ENCODE measurements at regions of chr1 and their contacts with region 1.

Region 1: GRCh38 chr1:169893494-169894362 is at the start of gene SCYL3:
- DNase-seq: peak; percentile 92
- ATAC-seq: peak; percentile 87
- H3K4me3 Mint-ChIP-seq: peak within 1 kb of the TSS; percentile 80
- H3K27ac Mint-ChIP-seq: peak within 1 kb of the TSS; percentile 99
- H3K4me1 Mint-ChIP-seq: peaks cover 44% of the 10 kb centered on the region
- H3K27me3 Mint-ChIP-seq: no peaks in the 10 kb centered on the region
- total RNA-seq, gene SCYL3: 11.0 to 12.0 TPM

Region 2: GRCh38 chr1:168348146-168348709 is 1545.5 kb before region 1 on chr1:
- CTCF ChIA-PET with region 1: no interaction called
- POLR2A ChIA-PET with region 1: no interaction called
- intact Hi-C with region 1: loop called in 1 of 2 experiments (anchors 5 kb)
- DNase-seq: peak; percentile 24
- ATAC-seq: peak; percentile 42
- H3K4me3 Mint-ChIP-seq: peak overlapping the region; percentile 78
- H3K27ac Mint-ChIP-seq: peak overlapping the region; percentile 88
- H3K4me1 Mint-ChIP-seq: peaks cover 15% of the 10 kb centered on the region
- H3K27me3 Mint-ChIP-seq: no peaks in the 10 kb centered on the region

Region 3: DNA sequence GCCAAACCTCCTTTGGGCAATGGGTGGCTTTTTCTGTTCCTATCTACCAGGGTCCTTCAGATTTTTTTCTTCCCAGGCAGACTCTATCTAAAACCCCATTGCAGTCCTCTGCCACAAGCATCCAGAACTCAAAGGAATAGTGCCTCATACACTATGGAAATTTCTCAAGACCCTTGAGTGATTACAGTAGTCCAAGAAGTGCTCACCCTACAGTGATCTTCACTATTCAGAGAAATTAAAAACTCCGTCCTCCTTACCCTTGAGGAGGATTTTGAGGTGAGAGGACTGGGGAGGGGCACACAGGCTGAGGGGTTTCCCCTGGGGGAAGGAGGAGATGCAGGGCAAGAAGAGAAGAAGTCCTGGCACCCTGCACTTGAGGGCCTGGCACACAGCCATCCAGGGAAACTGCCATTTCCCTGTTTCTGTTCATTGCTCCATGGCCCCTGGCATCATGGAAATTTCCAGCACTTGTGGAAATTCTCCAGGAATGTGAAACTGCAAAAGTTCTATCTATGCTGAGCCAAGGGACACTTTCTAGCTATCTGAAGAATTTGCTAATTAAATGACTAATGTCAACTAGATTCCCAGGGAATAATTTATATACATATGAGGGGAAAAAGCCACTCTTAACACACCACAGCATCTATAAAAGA is 889.7 kb before region 1 on chr1:
- CTCF ChIA-PET with region 1: no interaction called
- POLR2A ChIA-PET with region 1: no interaction called
- intact Hi-C with region 1: no loop called
- DNase-seq: no peak
- ATAC-seq: no peak
- H3K4me3 Mint-ChIP-seq: no peak overlapping the region
- H3K27ac Mint-ChIP-seq: no peak overlapping the region
- H3K4me1 Mint-ChIP-seq: no peaks in the 10 kb centered on the region
- H3K27me3 Mint-ChIP-seq: no peaks in the 10 kb centered on the region

Region 4: GRCh38 chr1:169694304-169695075 is 199.2 kb before region 1 on chr1:
- CTCF ChIA-PET with region 1: interaction called, 3 read pairs
- POLR2A ChIA-PET with region 1: no interaction called
- intact Hi-C with region 1: loop called in 1 of 2 experiments (anchors 5 kb)
- DNase-seq: peak; percentile 52
- ATAC-seq: peak; percentile 26
- H3K4me3 Mint-ChIP-seq: peak overlapping the region; percentile 39
- H3K27ac Mint-ChIP-seq: peak overlapping the region; percentile 95
- H3K4me1 Mint-ChIP-seq: peaks cover 97% of the 10 kb centered on the region
- H3K27me3 Mint-ChIP-seq: no peaks in the 10 kb centered on the region

Region 5: DNA sequence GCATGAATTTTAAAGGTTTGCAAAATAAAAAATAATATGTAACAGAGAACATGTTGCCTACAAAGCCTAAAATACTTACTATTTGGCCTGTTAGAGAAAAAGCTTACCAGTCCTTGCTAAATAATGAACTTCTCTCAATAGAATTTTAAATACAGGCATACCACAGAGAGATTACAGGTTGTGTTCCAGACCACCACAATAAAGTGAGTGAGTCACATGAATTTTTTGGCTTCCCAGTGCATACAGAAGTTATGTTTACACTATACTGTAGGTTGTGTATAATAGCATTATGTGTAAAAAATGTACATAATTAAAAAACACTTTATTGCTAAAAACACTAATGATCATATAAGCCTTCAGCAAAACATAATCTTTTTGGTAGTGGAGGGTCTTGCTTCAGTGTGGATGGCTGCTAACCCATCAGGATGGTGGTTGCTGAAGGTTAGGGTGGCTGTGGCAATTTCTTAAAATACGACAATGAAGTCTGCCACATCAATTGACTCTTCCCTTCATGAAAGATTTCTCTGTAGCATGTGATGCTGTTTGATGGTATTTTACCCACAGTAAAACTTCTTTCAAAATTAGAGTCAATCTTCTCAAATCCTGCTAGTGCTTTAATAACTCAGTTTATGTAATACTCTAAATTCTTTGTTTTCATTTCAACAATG is 48.7 kb before region 1 on chr1:
- CTCF ChIA-PET with region 1: no interaction called
- POLR2A ChIA-PET with region 1: no interaction called
- intact Hi-C with region 1: no loop called
- DNase-seq: no peak
- ATAC-seq: no peak
- H3K4me3 Mint-ChIP-seq: no peak overlapping the region
- H3K27ac Mint-ChIP-seq: no peak overlapping the region
- H3K4me1 Mint-ChIP-seq: peaks cover 2% of the 10 kb centered on the region
- H3K27me3 Mint-ChIP-seq: no peaks in the 10 kb centered on the region

Region 6: DNA sequence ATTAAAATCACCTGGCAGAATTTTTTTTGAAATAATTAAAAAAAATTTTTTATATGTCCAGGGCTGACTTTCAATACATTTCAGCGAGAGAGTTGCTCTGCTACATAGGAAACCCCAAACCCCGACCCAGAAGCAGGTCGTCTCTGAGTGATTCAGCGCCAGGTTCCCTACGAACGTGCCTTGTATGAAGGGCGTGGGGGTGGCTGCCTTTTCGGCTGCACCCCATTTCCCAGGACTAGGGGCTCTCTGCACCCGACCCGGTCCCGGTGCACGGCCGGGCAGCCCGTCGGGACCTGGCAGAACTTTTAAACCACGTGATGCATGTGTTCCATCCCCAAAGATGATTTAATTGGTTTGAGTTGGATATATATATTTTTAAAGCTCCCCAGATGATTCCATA is 15.8 kb after region 1 on chr1:
- CTCF ChIA-PET with region 1: interaction called, 4 read pairs
- POLR2A ChIA-PET with region 1: no interaction called
- intact Hi-C with region 1: loop called in 1 of 2 experiments (anchors 2 kb)
- DNase-seq: no peak
- ATAC-seq: no peak
- H3K4me3 Mint-ChIP-seq: no peak overlapping the region
- H3K27ac Mint-ChIP-seq: no peak overlapping the region
- H3K4me1 Mint-ChIP-seq: peaks cover 12% of the 10 kb centered on the region
- H3K27me3 Mint-ChIP-seq: no peaks in the 10 kb centered on the region

Region 7: DNA sequence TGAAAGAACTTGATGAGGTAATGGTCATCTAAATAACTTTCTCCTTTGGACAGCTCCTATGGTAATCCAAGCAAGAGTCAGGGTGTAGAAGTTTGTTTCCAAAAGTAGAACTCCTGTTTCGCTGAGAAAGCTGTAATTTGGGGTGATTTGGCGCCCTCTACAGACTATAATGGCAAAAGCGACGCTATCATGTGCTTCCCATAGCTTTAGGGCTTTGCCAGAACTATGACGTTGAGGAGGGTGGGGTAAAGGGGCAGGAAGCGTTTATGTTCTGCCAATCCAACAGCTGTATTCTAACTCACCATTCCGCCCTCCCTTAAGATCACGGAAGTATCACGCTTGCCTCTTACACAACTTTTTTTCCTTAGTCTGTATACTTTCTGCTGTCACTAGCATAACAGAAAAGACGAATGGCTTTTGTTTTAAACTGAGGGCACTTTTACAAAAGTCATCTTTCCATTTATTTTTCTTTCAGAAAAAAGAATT is 1420.2 kb after region 1 on chr1 and contains the start of gene FMO4:
- CTCF ChIA-PET with region 1: no interaction called
- POLR2A ChIA-PET with region 1: no interaction called
- intact Hi-C with region 1: loop called in 1 of 2 experiments (anchors 10 kb)
- DNase-seq: peak; percentile 86
- ATAC-seq: peak; percentile 100
- H3K4me3 Mint-ChIP-seq: peak within 1 kb of the TSS; percentile 72
- H3K27ac Mint-ChIP-seq: peak within 1 kb of the TSS; percentile 87
- H3K4me1 Mint-ChIP-seq: peaks cover 14% of the 10 kb centered on the region
- H3K27me3 Mint-ChIP-seq: no peaks in the 10 kb centered on the region
- total RNA-seq, gene FMO4: 1.4 to 2.8 TPM

Region 8: DNA sequence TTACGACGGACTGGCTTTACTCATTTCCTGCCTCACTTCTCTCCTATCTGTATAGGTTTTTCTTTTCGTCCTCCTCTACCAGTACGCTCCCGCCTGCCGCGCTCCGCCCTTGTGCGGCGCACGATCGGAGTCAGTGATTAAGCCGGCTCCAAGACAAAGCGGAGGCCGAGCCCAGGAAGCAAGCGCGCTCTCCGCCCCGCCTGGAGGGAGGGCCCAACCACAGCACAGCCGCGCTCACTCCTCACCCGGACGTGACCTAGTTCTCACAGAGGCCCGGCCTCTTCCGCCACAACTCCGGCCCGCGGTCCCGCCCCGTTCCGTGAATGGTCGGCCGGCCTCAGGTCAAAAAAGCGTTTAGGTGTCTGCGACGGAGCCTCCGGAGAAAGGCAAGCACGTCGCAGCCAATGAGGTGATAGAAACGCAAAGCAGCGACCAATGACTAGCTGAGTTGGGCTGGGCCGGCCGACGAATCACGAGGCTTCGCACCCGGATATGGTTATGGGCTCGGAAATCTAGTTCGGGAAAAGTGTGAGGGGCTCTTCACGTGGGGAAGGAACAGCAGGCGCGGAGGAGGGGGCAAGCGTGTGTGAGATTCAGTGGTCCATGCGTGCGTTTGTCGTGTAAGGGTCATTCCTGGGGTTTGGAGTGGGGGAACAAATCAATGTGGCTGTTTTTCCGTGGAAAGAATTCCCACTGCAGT is 1887.6 kb after region 1 on chr1 and contains the start of gene METTL13:
- CTCF ChIA-PET with region 1: no interaction called
- POLR2A ChIA-PET with region 1: no interaction called
- intact Hi-C with region 1: loop called (anchors 2 to 10 kb)
- DNase-seq: peak; percentile 99
- ATAC-seq: peak; percentile 97
- H3K4me3 Mint-ChIP-seq: peak within 1 kb of the TSS; percentile 92
- H3K27ac Mint-ChIP-seq: peak within 1 kb of the TSS; percentile 97
- H3K4me1 Mint-ChIP-seq: peaks cover 57% of the 10 kb centered on the region
- H3K27me3 Mint-ChIP-seq: no peaks in the 10 kb centered on the region
- total RNA-seq, gene METTL13: 41.1 to 52.9 TPM